Heart right ventricle (tissue), 16 donors: ENCODE measurements at regions of chr3 and their contacts with region 1.

Region 1: GRCh38 chr3:42025370-42026138 is 63.7 kb upstream of the ULK4 start:
- DNase-seq: peak; percentile 78 to 97
- ATAC-seq: peak; percentile 95 to 99 (median 98)
- H3K4me3 ChIP-seq: peak overlapping the region in 6 of 10 donors; percentile 15 to 28 (median 20)
- H3K27ac ChIP-seq: peak overlapping the region; percentile 76 to 97 (median 89)
- H3K4me1 ChIP-seq: peaks cover 20 to 89% (median 78%) of the 10 kb centered on the region in 9 donors
- H3K27me3 ChIP-seq: no peaks in the 10 kb centered on the region
- CTCF ChIP-seq: no peak

Region 2: GRCh38 chr3:42061713-42062408 is 36.3 kb after region 1 on chr3:
- intact Hi-C with region 1: loop called in 4 of 10 experiments (anchors 5 kb)
- DNase-seq: peak; percentile 74 to 93
- ATAC-seq: peak; percentile 88 to 94 (median 91)
- H3K4me3 ChIP-seq: peak overlapping the region in 4 of 10 donors; percentile 0 to 35 (median 20)
- H3K27ac ChIP-seq: peak overlapping the region; percentile 59 to 95 (median 90)
- H3K4me1 ChIP-seq: peaks cover 19 to 100% (median 90%) of the 10 kb centered on the region in 9 donors
- H3K27me3 ChIP-seq: no peaks in the 10 kb centered on the region
- CTCF ChIP-seq: no peak

Region 3: GRCh38 chr3:42067326-42067725 is 41.8 kb after region 1 on chr3:
- intact Hi-C with region 1: loop called in 4 of 10 experiments (anchors 5 kb)
- DNase-seq: peak in 1 of 2 donors; percentile 44
- ATAC-seq: peak in 7 of 8 donors; percentile 47 to 73 (median 64)
- H3K4me3 ChIP-seq: peak overlapping the region in 4 of 10 donors; percentile 10 to 18 (median 16)
- H3K27ac ChIP-seq: peak overlapping the region; percentile 82 to 95 (median 90)
- H3K4me1 ChIP-seq: peaks cover 35 to 100% (median 90%) of the 10 kb centered on the region in 9 donors
- H3K27me3 ChIP-seq: no peaks in the 10 kb centered on the region
- CTCF ChIP-seq: no peak